CD4-positive, alpha-beta T cell (primary cell): ENCODE measurements at regions of chr1 and their contacts with region 1.

Region 1: DNA sequence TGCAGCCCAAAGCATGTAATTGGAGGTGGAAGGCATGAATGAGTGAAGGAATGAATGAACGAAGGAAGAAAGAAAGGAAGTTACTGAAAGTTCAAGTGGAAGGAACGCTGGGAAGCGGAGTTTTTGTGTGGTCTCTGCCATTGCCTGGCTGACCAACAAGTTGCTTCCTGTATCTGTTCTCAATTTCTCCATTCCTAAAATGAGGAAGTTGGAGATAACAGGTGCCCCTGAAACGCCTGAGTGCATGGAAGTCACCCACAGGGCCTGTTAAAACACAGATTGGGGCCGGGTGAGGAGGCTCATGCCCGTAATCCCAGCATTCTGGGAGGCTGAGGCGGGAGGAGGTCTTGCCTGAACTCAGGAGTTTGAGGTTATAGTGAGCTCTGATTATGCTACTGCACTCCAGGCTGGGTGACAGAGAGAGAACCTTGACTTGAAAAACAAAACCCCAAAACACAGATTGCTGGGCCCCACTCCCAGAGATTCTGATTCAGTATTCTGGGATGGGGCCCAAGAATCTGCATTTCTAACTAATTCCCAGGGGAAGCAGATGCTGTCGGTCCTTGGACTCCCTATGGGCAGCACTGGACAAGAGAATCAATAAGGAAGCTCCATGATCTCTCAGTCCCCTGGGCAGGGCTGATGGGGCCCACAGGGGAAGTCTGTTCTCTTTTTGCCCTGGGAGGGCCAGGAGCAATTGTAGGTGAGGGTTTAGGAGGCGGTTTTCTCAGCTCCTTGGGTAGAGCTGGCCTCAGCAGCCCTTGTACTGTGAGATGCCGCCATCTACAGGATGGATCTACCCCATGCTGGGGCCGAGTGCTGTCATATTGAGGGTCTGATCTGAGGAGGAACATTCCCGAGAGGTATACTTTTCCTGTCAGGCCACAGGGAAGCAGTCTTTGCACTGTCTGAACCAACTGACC is 3.3 kb upstream of the CNR2 start:
- DNase-seq: peak; percentile 9 to 74 (median 36)
- ATAC-seq: peak; percentile 92
- H3K4me3 ChIP-seq: no peak overlapping the region
- H3K4me3 Mint-ChIP-seq: no peak overlapping the region
- H3K27ac ChIP-seq: no peak overlapping the region
- H3K27ac Mint-ChIP-seq: no peak overlapping the region
- H3K4me1 ChIP-seq: peaks cover 21% of the 10 kb centered on the region
- H3K4me1 Mint-ChIP-seq: peaks cover 26% of the 10 kb centered on the region
- H3K27me3 ChIP-seq: no peaks in the 10 kb centered on the region
- H3K27me3 Mint-ChIP-seq: no peaks in the 10 kb centered on the region
- CTCF ChIP-seq: no peak

Region 2: DNA sequence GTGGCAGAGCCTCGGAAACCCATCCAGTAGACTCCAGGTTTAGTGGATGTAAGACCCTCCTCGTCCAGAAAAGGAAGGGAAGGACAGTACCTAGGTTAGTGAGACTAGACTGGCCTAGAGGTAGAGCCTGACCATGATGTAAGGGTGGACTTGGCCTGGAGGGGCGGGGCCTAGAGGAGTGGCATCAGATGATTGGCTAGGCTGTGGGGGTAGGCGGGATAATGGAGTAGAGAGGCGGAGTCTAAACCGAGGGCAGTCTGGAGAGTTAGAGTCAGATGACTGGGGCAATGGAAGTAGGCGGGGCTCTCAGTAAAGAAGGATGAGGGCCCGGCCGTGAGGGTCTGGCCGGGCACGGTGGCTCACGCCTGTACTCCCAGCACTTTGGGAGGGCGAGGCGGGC is 1135.8 kb before region 1 on chr1:
- CTCF ChIA-PET with region 1: no interaction called
- POLR2A ChIA-PET with region 1: no interaction called
- intact Hi-C with region 1: no loop called
- DNase-seq: peak in 1 of 14 experiments; percentile 19
- ATAC-seq: no peak
- H3K4me3 ChIP-seq: no peak overlapping the region
- H3K4me3 Mint-ChIP-seq: no peak overlapping the region
- H3K27ac ChIP-seq: no peak overlapping the region
- H3K27ac Mint-ChIP-seq: no peak overlapping the region
- H3K4me1 ChIP-seq: no peaks in the 10 kb centered on the region
- H3K4me1 Mint-ChIP-seq: no peaks in the 10 kb centered on the region
- H3K27me3 ChIP-seq: peaks cover 2 to 5% of the 10 kb centered on the region in 2 experiments
- H3K27me3 Mint-ChIP-seq: peaks cover 44% of the 10 kb centered on the region
- CTCF ChIP-seq: no peak

Region 3: GRCh38 chr1:23772049-23772853 is 144.2 kb before region 1 on chr1:
- CTCF ChIA-PET with region 1: interaction called, 5 read pairs
- POLR2A ChIA-PET with region 1: interaction called, 6 read pairs
- intact Hi-C with region 1: loop called (anchors 1 kb)
- DNase-seq: peak; percentile 75 to 89 (median 82)
- ATAC-seq: peak; percentile 97
- H3K4me3 ChIP-seq: no peak overlapping the region
- H3K4me3 Mint-ChIP-seq: peak overlapping the region; percentile 34
- H3K27ac ChIP-seq: no peak overlapping the region
- H3K27ac Mint-ChIP-seq: peak overlapping the region; percentile 15
- H3K4me1 ChIP-seq: peaks cover 6% of the 10 kb centered on the region
- H3K4me1 Mint-ChIP-seq: peaks cover 21% of the 10 kb centered on the region
- H3K27me3 ChIP-seq: no peaks in the 10 kb centered on the region
- H3K27me3 Mint-ChIP-seq: no peaks in the 10 kb centered on the region
- CTCF ChIP-seq: peak; percentile 95

Region 4: DNA sequence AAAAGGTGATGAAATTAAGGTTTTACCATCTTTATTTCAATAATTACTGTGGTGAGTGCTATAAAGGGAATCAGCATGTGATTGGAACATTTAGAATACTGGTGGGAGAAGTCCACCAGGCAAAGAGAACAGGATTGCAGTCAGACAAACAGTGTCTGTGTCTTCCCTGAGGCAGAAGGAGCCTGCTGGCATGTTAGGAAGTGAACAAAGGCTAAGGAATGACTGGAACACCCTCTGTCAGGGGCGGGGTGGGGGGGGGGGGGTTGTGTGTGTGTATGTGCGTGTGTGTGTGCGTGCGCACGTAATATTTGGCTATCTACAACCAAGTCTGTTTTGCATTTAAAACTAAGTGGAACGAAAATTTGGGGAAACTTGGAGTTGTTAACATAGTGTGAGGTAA is 756.9 kb after region 1 on chr1:
- CTCF ChIA-PET with region 1: no interaction called
- POLR2A ChIA-PET with region 1: no interaction called
- intact Hi-C with region 1: no loop called
- DNase-seq: no peak
- ATAC-seq: no peak
- H3K4me3 ChIP-seq: no peak overlapping the region
- H3K4me3 Mint-ChIP-seq: no peak overlapping the region
- H3K27ac ChIP-seq: no peak overlapping the region
- H3K27ac Mint-ChIP-seq: peak overlapping the region; percentile 24
- H3K4me1 ChIP-seq: no peaks in the 10 kb centered on the region
- H3K4me1 Mint-ChIP-seq: peaks cover 4% of the 10 kb centered on the region
- H3K27me3 ChIP-seq: no peaks in the 10 kb centered on the region
- H3K27me3 Mint-ChIP-seq: no peaks in the 10 kb centered on the region
- CTCF ChIP-seq: no peak